Dorsolateral prefrontal cortex (tissue), 120 donors: ENCODE measurements at regions of chr10 and their contacts with region 1.

Region 1: DNA sequence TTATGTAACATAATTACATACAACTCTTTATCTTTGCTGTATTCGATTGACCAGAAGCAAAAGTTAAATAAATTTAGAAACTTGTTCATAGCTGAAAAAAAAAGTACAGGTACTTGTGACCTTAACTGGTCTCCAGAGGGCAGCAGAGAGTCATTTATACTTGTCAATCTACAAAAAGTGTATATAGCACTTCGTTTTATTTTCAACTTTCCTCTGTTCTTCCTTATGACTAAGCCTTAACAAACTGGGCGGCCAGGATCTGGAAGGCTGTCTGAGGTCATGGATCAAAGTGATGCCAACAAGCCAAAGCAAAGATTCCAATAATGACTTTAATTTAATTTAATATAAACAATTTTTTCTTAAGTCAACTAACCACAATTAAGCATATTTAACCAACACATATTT is 29.8 kb downstream of the C10orf67 start:
- DNase-seq: peak in 3 of 10 donors; percentile 25 to 39 (median 28)
- H3K4me3 ChIP-seq: no peak overlapping the region
- H3K27ac ChIP-seq: no peak overlapping the region
- H3K27me3 ChIP-seq: no peaks in the 10 kb centered on the region
- CTCF ChIP-seq: peak; percentile 69 to 98 (median 85)

Region 2: DNA sequence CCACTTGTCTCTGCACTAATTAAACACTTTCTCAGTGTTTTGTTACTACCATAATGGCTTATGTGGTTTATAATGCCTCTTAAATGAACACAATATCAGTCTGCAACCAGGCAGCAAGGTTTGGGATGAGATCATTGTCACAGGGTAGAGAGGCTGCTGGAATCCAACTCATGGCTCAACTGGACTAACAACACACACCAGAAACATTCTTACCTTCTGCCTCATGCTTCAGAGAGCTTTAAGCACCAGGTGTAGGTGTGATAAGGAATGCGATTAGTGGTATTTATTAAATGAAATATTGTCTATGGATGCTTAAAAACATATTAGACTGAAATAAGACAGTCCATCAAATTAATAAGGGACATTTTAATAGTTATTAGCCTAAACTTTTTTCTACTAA is 97.4 kb before region 1 on chr10:
- intact Hi-C with region 1: no loop called
- DNase-seq: no peak
- H3K4me3 ChIP-seq: no peak overlapping the region
- H3K27ac ChIP-seq: no peak overlapping the region
- H3K27me3 ChIP-seq: peaks cover 0 to 4% (median 0%) of the 10 kb centered on the region in 45 donors
- CTCF ChIP-seq: no peak

Region 3: GRCh38 chr10:23358357-23358756 is 43.5 kb after region 1 on chr10:
- intact Hi-C with region 1: loop called in 1 of 2 experiments (anchors 5 kb)
- DNase-seq: no peak
- H3K4me3 ChIP-seq: no peak overlapping the region
- H3K27ac ChIP-seq: no peak overlapping the region
- H3K27me3 ChIP-seq: no peaks in the 10 kb centered on the region
- CTCF ChIP-seq: peak in 47 of 56 donors; percentile 12 to 61 (median 35)

Region 4: GRCh38 chr10:23525406-23525805 is 210.6 kb after region 1 on chr10:
- intact Hi-C with region 1: loop called (anchors 2 to 5 kb)
- DNase-seq: no peak
- H3K4me3 ChIP-seq: no peak overlapping the region
- H3K27ac ChIP-seq: no peak overlapping the region
- H3K27me3 ChIP-seq: peaks cover 0 to 4% (median 0%) of the 10 kb centered on the region in 45 donors
- CTCF ChIP-seq: peak in 55 of 56 donors; percentile 16 to 80 (median 53)

Region 5: GRCh38 chr10:23702977-23703414 is 388.2 kb after region 1 on chr10:
- intact Hi-C with region 1: loop called in 1 of 2 experiments (anchors 5 kb)
- DNase-seq: peak in 7 of 10 donors; percentile 9 to 55 (median 41)
- H3K4me3 ChIP-seq: peak overlapping the region in 1 of 59 donors; percentile 24
- H3K27ac ChIP-seq: no peak overlapping the region
- H3K27me3 ChIP-seq: peaks cover 0 to 9% (median 0%) of the 10 kb centered on the region in 45 donors
- CTCF ChIP-seq: peak; percentile 19 to 79 (median 65)